Lower leg skin (tissue), 4 donors: ENCODE measurements at regions of chr11 and their contacts with region 1.

Region 1: DNA sequence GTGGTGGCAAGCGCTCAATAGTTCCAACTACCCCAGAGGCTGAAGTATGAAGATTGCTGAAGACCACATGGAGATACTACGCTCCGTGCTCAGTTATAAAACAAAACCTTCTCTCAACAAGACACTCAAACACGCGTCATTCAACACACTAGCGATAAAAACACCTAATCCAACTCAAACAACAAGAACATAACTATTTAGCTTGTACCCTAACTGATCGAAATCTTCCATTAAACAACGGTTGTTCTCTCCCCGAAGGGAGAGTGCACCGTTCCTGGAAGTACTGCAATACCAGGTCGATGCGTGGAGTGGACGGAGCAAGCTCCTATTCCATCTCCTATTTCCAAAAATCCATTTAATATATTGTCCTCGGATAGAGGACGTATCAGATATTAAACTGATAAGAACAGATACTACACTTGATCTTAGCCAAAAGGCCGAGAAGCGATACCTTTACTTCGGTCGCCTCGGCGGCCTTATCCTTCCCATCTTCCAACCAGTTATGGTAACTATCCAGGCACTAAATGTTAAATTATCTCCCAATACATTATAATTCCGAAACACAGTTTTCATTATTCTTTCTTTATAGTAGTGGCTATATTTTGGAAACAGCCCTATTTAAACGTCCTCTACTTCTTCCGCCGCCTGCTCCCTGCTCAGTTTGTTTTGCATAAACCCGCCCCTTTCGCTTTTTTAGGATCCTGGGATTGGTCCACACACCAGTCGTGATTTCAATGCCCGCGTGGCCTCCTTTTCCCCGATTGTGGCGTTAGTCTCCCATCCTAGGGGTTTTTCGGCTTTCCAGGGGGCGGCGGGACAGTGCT is 2.2 kb upstream of the WDR74 start:
- DNase-seq: peak; percentile 92 to 96
- H3K4me3 ChIP-seq: peak overlapping the region; percentile 24
- CTCF ChIP-seq: no peak
- POLR2A ChIP-seq: peak in 1 of 2 donors; percentile 99

Region 2: GRCh38 chr11:61152816-61153592 is 1688.6 kb before region 1 on chr11:
- intact Hi-C with region 1: loop called (anchors 10 kb)
- DNase-seq: no peak
- H3K4me3 ChIP-seq: no peak overlapping the region
- CTCF ChIP-seq: no peak
- POLR2A ChIP-seq: no peak

Region 3: GRCh38 chr11:62591448-62592145 is 250.0 kb before region 1 on chr11 and contains the start of gene TUT1:
- intact Hi-C with region 1: no loop called
- DNase-seq: peak; percentile 98 to 99
- H3K4me3 ChIP-seq: peak within 1 kb of the TSS; percentile 67
- CTCF ChIP-seq: no peak
- POLR2A ChIP-seq: peak in 1 of 2 donors; percentile 91
- total RNA-seq, gene TUT1: 11.0 to 29.8 (median 15.8) TPM

Region 4: DNA sequence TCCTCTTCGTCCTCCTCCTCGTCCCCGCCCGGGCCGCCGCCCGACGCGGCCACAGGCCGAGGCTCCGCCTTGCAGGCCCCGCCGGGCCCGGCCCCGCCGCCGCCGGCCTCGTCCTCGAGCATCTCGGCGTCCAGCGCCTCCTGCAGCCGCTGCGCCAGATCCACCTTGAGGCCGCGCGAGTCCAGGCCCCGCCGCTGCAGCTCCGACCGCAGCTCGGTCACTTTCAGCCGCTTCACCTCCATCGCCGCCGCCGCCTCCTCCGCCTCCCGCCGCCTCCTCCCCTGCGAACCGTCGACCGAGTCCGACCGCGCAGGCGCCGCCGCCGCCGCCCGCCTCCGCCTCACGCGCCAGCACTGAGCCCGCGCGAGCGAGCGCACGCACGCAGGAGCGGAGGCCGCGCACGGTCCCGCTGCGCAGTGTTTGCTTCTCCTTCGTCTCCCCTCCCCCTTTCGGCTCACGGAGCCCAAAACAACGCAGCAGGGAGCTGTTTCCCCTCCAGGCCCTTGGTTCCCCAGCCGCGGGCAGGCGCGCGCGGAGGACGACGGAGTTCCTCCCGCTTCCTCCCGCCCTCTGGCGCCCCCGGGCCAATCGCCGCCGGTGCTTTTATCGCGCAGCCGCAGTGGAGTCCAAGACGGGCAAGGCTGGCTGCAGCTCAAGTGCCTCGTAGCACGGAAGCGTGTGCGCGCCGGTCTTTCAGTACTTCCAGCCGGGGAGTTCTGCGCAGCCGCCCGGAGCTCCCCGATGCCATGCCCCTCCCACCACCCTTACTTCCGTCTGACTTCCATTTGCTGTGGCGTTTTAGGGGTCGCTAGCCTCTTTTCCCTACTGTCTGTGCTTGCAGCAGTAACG is 114.4 kb before region 1 on chr11 and contains the start of gene HNRNPUL2:
- intact Hi-C with region 1: no loop called
- DNase-seq: peak; percentile 97 to 100
- H3K4me3 ChIP-seq: peak within 1 kb of the TSS; percentile 88
- CTCF ChIP-seq: no peak
- POLR2A ChIP-seq: peak in 1 of 2 donors; percentile 89
- total RNA-seq, gene HNRNPUL2: 19.9 to 30.8 (median 24.3) TPM

Region 5: GRCh38 chr11:63298258-63298657 is 456.7 kb after region 1 on chr11:
- intact Hi-C with region 1: no loop called
- DNase-seq: no peak
- H3K4me3 ChIP-seq: no peak overlapping the region
- CTCF ChIP-seq: no peak
- POLR2A ChIP-seq: no peak